Mammary epithelial cell (primary cell): ENCODE measurements at regions of chr2 and their contacts with region 1.

Region 1: DNA sequence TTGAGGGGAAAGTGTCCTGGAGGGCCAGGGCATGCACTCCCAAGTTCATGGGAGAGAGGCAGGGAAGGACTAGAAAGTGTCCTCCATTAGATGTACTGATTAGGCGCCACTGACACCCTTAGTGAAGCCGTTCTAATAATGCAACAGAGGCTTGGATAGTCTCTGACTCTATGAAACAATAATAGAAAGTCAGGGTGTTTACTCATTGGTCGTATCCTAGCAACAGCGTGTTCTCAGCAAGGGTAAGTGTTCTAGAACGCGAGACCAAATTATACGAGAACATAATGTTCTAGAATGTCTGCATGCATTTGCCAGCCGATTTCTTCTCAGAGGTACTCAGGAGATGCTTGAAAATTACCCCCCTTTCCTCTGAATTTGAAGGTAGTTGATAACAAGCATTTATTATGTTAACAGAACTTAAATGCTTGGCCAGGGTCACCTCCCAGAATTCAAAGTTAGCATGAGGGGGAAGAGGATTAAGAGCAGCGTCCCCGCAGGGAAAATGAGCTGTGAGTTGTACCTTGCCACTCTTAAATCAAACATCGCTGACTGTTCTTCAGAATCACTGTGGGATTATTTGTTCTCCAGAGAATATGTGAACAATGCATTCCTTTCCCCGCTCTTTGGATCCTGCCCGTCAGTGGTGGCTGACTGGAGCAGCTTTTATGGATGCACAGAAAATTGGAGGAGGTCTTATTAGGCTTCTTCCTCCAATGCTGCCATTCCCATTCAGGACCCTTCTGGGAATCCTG is 33.7 kb upstream of the PDIA6 start:
- DNase-seq: no peak
- H3K4me3 ChIP-seq: no peak overlapping the region
- H3K27ac ChIP-seq: no peak overlapping the region
- H3K4me1 ChIP-seq: no peaks in the 10 kb centered on the region
- H3K27me3 ChIP-seq: no peaks in the 10 kb centered on the region
- CTCF ChIP-seq: no peak

Region 2: GRCh38 chr2:10792001-10792634 is 54.2 kb before region 1 on chr2:
- CTCF ChIA-PET with region 1: no interaction called
- dilution Hi-C with region 1: no loop called
- in situ Hi-C with region 1: no loop called
- intact Hi-C with region 1: no loop called
- DNase-seq: no peak
- H3K4me3 ChIP-seq: no peak overlapping the region
- H3K27ac ChIP-seq: no peak overlapping the region
- H3K4me1 ChIP-seq: no peaks in the 10 kb centered on the region
- H3K27me3 ChIP-seq: no peaks in the 10 kb centered on the region
- CTCF ChIP-seq: no peak

Region 3: GRCh38 chr2:10926191-10926820 is 80.0 kb after region 1 on chr2:
- CTCF ChIA-PET with region 1: no interaction called
- dilution Hi-C with region 1: loop called (anchors 5 kb)
- in situ Hi-C with region 1: no loop called
- intact Hi-C with region 1: no loop called
- DNase-seq: no peak
- H3K4me3 ChIP-seq: no peak overlapping the region
- H3K27ac ChIP-seq: no peak overlapping the region
- H3K4me1 ChIP-seq: no peaks in the 10 kb centered on the region
- H3K27me3 ChIP-seq: peaks cover 4% of the 10 kb centered on the region
- CTCF ChIP-seq: no peak

Region 4: DNA sequence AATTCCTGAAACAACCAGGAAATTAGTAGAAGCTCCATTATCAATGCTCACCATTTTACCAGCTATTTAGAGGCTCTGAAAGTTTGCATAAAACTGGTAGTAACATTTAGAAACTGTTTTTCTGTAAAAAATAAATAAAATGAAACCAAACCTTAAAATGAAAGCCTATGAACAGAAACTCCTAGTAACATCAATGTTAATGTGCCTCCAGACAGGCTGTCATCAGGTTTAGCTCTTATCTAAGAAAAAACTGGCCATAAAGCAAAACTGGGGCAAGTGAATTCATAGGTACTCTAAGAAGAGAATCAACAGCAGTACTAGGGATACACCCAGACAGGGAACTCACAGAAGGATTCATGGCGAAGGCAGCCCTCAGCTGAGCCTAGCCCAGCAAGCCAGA is 611.6 kb after region 1 on chr2:
- CTCF ChIA-PET with region 1: no interaction called
- dilution Hi-C with region 1: no loop called
- in situ Hi-C with region 1: no loop called
- intact Hi-C with region 1: no loop called
- DNase-seq: no peak
- H3K4me3 ChIP-seq: no peak overlapping the region
- H3K27ac ChIP-seq: no peak overlapping the region
- H3K4me1 ChIP-seq: peaks cover 5% of the 10 kb centered on the region
- H3K27me3 ChIP-seq: no peaks in the 10 kb centered on the region
- CTCF ChIP-seq: no peak